ENCODE measurements at regions of chr20 and their contacts with region 1.

Region 1: GRCh38 chr20:33299111-33299603 is 16.1 kb downstream of the BPIFB1 start:
- DNase-seq: no peak
- H3K4me3 ChIP-seq: no peak overlapping the region
- CTCF ChIP-seq: peak; percentile 91

Region 2: GRCh38 chr20:33262658-33263065 is 36.5 kb before region 1 on chr20:
- CTCF ChIA-PET with region 1: interaction called, 13 read pairs
- POLR2A ChIA-PET with region 1: no interaction called
- DNase-seq: no peak
- H3K4me3 ChIP-seq: no peak overlapping the region
- CTCF ChIP-seq: peak; percentile 69